ENCODE measurements at regions of chr16 and their contacts with region 1.

Region 1: DNA sequence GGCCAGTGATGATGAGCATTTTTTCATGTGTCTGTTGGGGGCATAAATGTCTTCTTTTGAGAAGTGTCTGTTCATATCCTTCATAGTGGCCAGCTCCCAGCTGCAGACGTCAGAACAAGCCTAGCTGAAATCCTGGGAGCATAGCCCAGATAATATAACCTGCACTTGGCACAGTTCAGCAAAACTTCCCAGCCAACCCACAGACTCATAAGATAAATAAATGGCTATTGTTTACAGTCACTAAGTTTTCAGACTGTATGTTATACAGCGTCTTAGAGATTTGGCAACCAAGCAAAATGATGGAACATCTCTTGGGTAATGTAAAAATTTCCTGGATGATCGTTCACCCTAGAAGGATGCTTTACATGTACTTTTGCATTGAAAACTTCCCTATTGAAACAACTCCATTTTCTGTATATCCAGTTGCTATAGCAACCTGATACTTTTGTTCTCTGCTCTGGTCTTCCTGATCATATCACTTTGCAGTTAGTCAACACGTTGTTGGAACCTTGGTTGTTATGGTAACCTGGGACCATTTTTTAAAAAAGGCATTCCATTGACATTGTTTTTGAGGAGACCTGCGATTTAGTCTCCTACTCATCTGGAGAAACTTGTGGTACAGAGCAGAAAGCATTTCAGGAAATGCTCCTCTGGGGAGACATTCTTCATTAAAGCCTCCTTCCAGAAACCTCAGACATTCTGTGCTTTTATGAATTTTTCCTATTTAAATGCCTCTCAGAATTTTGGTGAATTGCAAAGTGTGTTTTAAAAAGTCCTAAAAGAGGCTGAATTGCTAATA is 378.7 kb downstream of the HS3ST4 start:
- DNase-seq: no peak
- ATAC-seq: no peak
- H3K4me3 ChIP-seq: no peak overlapping the region
- H3K27ac ChIP-seq: no peak overlapping the region
- H3K4me1 ChIP-seq: no peaks in the 10 kb centered on the region
- H3K27me3 ChIP-seq: no peaks in the 10 kb centered on the region
- CTCF ChIP-seq: no peak

Region 2: GRCh38 chr16:25785361-25785760 is 285.1 kb before region 1 on chr16:
- intact Hi-C with region 1: no loop called
- DNase-seq: no peak
- ATAC-seq: no peak
- H3K4me3 ChIP-seq: no peak overlapping the region
- H3K27ac ChIP-seq: no peak overlapping the region
- H3K4me1 ChIP-seq: no peaks in the 10 kb centered on the region
- H3K27me3 ChIP-seq: no peaks in the 10 kb centered on the region
- CTCF ChIP-seq: no peak

Region 3: DNA sequence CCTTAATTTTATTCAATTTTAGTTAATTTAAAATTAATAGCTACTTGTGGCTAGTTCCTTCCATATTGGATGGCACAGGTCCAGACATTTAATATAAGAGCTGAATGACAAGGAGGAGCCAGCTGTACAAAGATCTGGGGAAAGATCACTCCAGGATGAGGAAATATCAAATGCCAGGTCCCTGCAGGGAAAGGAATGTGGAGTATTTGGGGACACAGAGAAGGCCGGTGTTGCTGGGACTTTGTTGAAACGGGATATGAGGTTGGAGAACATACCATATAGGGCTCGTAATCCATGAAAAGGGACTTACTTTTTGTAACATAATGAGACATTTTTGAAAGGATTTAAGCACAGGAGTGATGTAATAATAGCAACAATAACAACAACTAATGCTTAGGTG is 48.1 kb after region 1 on chr16:
- intact Hi-C with region 1: no loop called
- DNase-seq: no peak
- ATAC-seq: no peak
- H3K4me3 ChIP-seq: no peak overlapping the region
- H3K27ac ChIP-seq: no peak overlapping the region
- H3K4me1 ChIP-seq: no peaks in the 10 kb centered on the region
- H3K27me3 ChIP-seq: no peaks in the 10 kb centered on the region
- CTCF ChIP-seq: no peak

Region 4: DNA sequence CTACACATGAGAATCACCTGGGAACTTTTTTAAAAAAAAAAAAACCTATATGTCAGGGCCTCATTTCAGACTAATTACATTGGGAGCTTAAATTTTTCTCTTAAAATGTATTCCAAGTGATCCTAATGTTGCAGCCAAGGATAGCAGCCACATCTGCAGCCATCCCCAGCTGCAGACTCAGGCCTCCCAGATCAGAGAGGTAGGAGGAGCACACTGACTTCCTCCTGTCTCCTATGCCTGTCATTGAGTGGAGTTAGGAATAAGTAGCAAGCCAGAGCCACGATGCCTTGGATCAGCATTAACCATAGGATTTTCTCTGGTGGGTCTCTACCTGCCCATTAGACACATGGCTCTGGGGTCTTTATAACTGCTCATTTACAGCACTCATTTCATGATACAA is 84.7 kb after region 1 on chr16:
- intact Hi-C with region 1: no loop called
- DNase-seq: no peak
- ATAC-seq: no peak
- H3K4me3 ChIP-seq: no peak overlapping the region
- H3K27ac ChIP-seq: no peak overlapping the region
- H3K4me1 ChIP-seq: no peaks in the 10 kb centered on the region
- H3K27me3 ChIP-seq: no peaks in the 10 kb centered on the region
- CTCF ChIP-seq: no peak

Region 5: GRCh38 chr16:26334218-26335111 is 264.0 kb after region 1 on chr16:
- intact Hi-C with region 1: loop called (anchors 5 kb)
- DNase-seq: no peak
- ATAC-seq: no peak
- H3K4me3 ChIP-seq: no peak overlapping the region
- H3K27ac ChIP-seq: no peak overlapping the region
- H3K4me1 ChIP-seq: no peaks in the 10 kb centered on the region
- H3K27me3 ChIP-seq: no peaks in the 10 kb centered on the region
- CTCF ChIP-seq: no peak